Naive thymus-derived CD4-positive, alpha-beta T cell (primary cell): ENCODE measurements at regions of chr15 and their contacts with region 1.

Region 1: DNA sequence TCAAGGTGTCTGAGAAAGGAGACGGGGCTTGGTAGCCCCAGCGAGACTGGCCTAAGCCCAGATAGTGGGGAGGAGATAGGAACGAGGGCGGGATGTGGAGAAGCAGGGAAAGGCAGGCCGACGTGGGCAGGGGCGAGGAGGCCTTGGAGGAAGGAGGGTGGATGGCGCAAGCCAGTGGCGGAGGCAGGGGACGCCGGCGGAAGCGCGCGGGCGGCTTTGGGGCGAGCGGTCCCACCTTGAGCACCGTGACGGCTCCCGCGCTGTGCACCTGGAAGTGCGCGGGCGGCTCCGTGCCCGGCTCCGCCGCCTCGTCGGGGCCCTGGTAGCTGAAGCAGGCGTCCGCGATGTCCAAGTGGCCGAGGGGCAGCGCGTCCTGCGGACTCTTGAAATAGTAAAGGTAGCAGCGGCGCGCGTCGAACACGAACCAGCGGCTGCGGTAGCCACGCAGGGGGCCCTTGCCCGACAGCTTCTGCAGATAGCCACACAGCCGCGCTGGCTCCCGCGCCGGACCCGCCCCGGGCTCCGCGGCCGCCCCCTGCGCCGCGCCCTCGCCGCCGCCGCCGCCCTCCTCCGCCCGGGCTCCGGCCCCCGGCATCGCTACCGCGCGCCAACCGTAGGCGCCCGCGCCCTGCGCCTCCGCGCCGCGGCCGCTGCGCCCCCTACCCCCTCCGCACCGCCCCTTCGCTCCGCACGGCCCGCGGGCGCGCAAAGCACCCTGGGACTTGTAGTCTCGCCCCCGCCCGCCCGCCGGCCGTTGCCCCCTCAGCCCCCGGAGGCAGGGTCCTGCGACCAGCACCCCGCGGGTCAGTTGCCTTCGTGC is at the start of gene TBC1D2B:
- DNase-seq: peak; percentile 51 to 79 (median 65)
- ATAC-seq: peak; percentile 90
- H3K4me3 ChIP-seq: peak within 1 kb of the TSS; percentile 98
- H3K4me3 Mint-ChIP-seq: peak within 1 kb of the TSS; percentile 92 to 100 (median 98)
- H3K27ac ChIP-seq: peak within 1 kb of the TSS; percentile 70
- H3K27ac Mint-ChIP-seq: peak within 1 kb of the TSS; percentile 88 to 98 (median 95)
- H3K4me1 ChIP-seq: peaks cover 33 to 34% of the 10 kb centered on the region in 2 donors
- H3K4me1 Mint-ChIP-seq: peaks cover 36 to 56% (median 46%) of the 10 kb centered on the region in 7 donors
- H3K27me3 ChIP-seq: no peaks in the 10 kb centered on the region
- H3K27me3 Mint-ChIP-seq: no peaks in the 10 kb centered on the region
- total RNA-seq, gene TBC1D2B: 69.7 to 119 (median 86.1) TPM

Region 2: GRCh38 chr15:78000091-78000926 is 77.0 kb before region 1 on chr15:
- CTCF ChIA-PET with region 1: no interaction called
- POLR2A ChIA-PET with region 1: interaction called, 3 read pairs
- intact Hi-C with region 1: loop called in 1 of 2 experiments (anchors 2 kb)
- DNase-seq: peak; percentile 66 to 82 (median 78)
- ATAC-seq: peak; percentile 100
- H3K4me3 ChIP-seq: no peak overlapping the region
- H3K4me3 Mint-ChIP-seq: no peak overlapping the region
- H3K27ac ChIP-seq: no peak overlapping the region
- H3K27ac Mint-ChIP-seq: peak overlapping the region; percentile 19 to 87 (median 68)
- H3K4me1 ChIP-seq: no peaks in the 10 kb centered on the region
- H3K4me1 Mint-ChIP-seq: peaks cover 0 to 26% (median 5%) of the 10 kb centered on the region in 7 donors
- H3K27me3 ChIP-seq: no peaks in the 10 kb centered on the region
- H3K27me3 Mint-ChIP-seq: no peaks in the 10 kb centered on the region

Region 3: GRCh38 chr15:78034495-78035191 is 42.6 kb before region 1 on chr15:
- CTCF ChIA-PET with region 1: interaction called, 6 read pairs
- POLR2A ChIA-PET with region 1: interaction called, 78 read pairs
- intact Hi-C with region 1: loop called in 1 of 2 experiments (anchors 1 kb)
- DNase-seq: peak; percentile 33 to 78 (median 75)
- ATAC-seq: peak; percentile 87
- H3K4me3 ChIP-seq: peak overlapping the region; percentile 21
- H3K4me3 Mint-ChIP-seq: peak overlapping the region; percentile 56 to 82 (median 77)
- H3K27ac ChIP-seq: peak overlapping the region; percentile 42
- H3K27ac Mint-ChIP-seq: peak overlapping the region; percentile 71 to 97 (median 92)
- H3K4me1 ChIP-seq: peaks cover 60% of the 10 kb centered on the region in 2 donors
- H3K4me1 Mint-ChIP-seq: peaks cover 65 to 84% (median 76%) of the 10 kb centered on the region in 7 donors
- H3K27me3 ChIP-seq: no peaks in the 10 kb centered on the region
- H3K27me3 Mint-ChIP-seq: no peaks in the 10 kb centered on the region

Region 4: GRCh38 chr15:78049691-78050440 is 27.4 kb before region 1 on chr15:
- CTCF ChIA-PET with region 1: interaction called, 3 read pairs
- POLR2A ChIA-PET with region 1: interaction called, 292 read pairs
- intact Hi-C with region 1: loop called in 1 of 2 experiments (anchors 1 kb)
- DNase-seq: peak in 4 of 9 donors; percentile 34 to 63 (median 41)
- ATAC-seq: peak; percentile 61
- H3K4me3 ChIP-seq: peak overlapping the region; percentile 31
- H3K4me3 Mint-ChIP-seq: peak overlapping the region; percentile 59 to 84 (median 67)
- H3K27ac ChIP-seq: peak overlapping the region; percentile 70
- H3K27ac Mint-ChIP-seq: peak overlapping the region; percentile 82 to 98 (median 92)
- H3K4me1 ChIP-seq: peaks cover 75 to 100% of the 10 kb centered on the region in 2 donors
- H3K4me1 Mint-ChIP-seq: peaks cover 70 to 100% (median 94%) of the 10 kb centered on the region in 7 donors
- H3K27me3 ChIP-seq: no peaks in the 10 kb centered on the region
- H3K27me3 Mint-ChIP-seq: no peaks in the 10 kb centered on the region

Region 5: DNA sequence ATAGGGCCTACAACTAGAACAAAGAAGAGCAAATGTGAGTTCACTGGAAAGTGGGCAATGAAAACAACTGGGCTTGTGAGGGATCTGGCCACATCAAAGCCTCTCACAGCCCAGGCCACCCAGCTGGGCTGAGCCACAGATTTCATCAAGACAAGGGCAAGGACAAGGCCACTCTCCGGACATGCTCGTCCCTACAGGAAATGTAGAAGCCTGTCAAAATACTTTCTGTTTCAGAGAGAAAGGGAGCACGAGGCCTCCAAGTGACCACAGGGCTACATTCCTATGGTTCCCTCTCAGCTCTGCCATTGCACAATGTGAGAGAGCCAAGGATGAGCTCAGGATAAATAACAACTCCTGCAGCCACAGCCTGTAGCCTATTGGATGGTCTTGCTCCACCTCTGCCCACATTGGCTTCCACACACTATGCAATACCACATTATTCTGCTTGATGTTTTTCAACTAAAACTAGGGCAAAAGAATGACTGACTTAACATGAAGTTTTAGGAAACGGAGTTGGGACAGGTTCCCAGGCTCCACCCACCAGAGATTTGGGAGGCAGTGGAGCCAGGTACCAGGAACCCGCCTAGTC is 11.9 kb before region 1 on chr15:
- CTCF ChIA-PET with region 1: interaction called, 4 read pairs
- POLR2A ChIA-PET with region 1: interaction called, 292 read pairs
- intact Hi-C with region 1: loop called in 1 of 2 experiments (anchors 1 kb)
- DNase-seq: no peak
- ATAC-seq: peak; percentile 24
- H3K4me3 ChIP-seq: peak overlapping the region; percentile 25
- H3K4me3 Mint-ChIP-seq: no peak overlapping the region
- H3K27ac ChIP-seq: peak overlapping the region; percentile 17
- H3K27ac Mint-ChIP-seq: peak overlapping the region in 1 of 9 donors; percentile 94
- H3K4me1 ChIP-seq: peaks cover 82 to 84% of the 10 kb centered on the region in 2 donors
- H3K4me1 Mint-ChIP-seq: peaks cover 1 to 64% (median 3%) of the 10 kb centered on the region in 7 donors
- H3K27me3 ChIP-seq: no peaks in the 10 kb centered on the region
- H3K27me3 Mint-ChIP-seq: no peaks in the 10 kb centered on the region